ENCODE measurements at regions of chr1 and their contacts with region 1.

Region 1: DNA sequence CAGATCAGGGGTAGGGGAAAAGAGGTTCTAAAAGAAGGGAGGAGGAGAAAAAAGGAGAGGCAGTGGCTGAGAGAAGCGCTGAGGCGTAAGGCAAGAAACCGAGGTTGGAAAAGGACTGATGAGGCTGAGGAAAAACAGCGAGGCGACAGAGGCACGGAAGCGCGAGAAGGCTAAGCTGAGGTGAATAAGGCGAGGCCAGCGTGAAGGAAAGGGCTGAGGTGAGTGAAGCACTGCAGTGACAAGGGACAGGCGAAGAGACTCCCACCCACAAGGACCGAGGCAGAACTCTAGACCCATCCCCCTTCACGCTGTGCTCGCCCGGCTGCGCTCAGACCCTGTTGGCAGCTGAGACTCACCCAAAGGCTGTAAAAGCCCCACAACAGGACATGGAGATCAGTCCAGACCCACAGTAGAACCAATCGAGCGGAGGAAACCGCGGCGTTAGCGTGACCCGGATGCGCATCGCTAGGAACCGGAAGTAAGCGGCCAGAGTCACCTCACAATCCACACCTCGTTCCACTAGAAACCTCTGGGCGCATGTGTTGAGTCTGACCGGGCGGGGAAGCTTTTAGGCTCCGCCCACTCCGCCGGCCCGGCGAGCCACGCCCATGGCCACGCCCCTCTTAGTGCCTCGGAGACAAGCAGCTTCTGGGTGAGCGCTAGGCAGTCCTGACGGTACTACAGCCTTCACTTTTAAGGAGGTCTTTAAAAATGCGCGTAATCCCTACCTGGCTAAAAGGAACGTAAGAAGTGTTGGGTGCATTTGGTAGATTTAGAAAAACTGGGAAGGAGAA is at the start of gene EYA3:
- H3K4me3 ChIP-seq: peak within 1 kb of the TSS; percentile 93
- H3K27ac ChIP-seq: peak within 1 kb of the TSS; percentile 90
- H3K4me1 ChIP-seq: peaks cover 5% of the 10 kb centered on the region; the same call in 1 of the 2 replicates
- CTCF ChIP-seq: 0 out of 2 replicates have a peak, but pooled peaks have one; percentile 2

Region 2: DNA sequence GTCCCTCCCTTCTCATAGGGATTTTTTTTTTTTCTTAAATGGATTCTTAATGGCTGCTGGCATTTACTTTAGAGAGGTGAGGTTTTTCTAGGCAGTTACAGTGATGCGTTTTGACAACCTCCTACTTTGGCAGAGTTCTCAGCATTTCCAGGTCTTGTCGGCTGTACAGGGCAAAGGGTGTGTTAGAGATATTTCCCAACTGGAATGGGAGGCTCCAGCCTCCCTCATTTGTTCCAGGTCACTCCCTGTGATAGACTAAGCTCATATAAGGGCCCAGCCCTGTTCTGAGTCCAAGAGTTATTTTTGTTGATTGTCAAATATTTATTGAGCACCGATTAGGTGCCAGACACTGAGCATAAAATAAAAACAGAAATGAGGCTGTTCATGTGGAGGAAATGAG is 136.2 kb before region 1 on chr1:
- CTCF ChIA-PET with region 1: no interaction called
- POLR2A ChIA-PET with region 1: no interaction called
- H3K4me3 ChIP-seq: no peak overlapping the region
- H3K27ac ChIP-seq: no peak overlapping the region
- H3K4me1 ChIP-seq: no peaks in the 10 kb centered on the region
- CTCF ChIP-seq: no peak

Region 3: DNA sequence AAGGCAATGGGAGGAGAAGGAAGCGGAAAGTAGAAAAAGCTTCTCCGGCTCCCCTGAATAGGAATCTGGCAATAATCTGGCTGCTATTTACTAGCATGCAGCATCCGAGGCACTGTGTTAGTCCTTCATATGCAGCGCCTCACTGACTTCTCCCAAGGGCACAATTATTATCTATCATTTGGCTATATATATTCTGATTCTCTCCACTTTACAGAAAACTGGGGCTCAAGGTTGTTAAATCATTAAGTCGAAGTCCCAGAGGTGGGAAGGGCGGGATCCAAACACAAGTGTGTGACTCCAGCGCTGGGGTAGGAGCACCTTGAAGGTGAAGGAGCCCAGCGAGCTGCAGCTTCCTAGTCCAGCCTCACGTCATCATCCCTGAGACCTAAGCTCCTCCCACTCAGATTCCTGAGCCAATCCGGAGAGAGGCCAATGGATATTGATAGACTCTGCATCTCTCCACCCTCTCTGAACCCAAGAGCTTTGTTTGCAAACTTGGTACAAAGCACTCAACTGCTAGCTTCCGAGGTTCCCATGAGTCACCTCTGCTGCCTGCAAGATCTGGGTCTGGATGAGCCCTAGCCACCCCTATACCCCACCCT is 16.6 kb after region 1 on chr1:
- CTCF ChIA-PET with region 1: interaction called, 38 read pairs
- POLR2A ChIA-PET with region 1: interaction called, 19 read pairs
- H3K4me3 ChIP-seq: peak overlapping the region; percentile 8
- H3K27ac ChIP-seq: no peak overlapping the region
- H3K4me1 ChIP-seq: no peaks in the 10 kb centered on the region
- CTCF ChIP-seq: no peak

Region 4: DNA sequence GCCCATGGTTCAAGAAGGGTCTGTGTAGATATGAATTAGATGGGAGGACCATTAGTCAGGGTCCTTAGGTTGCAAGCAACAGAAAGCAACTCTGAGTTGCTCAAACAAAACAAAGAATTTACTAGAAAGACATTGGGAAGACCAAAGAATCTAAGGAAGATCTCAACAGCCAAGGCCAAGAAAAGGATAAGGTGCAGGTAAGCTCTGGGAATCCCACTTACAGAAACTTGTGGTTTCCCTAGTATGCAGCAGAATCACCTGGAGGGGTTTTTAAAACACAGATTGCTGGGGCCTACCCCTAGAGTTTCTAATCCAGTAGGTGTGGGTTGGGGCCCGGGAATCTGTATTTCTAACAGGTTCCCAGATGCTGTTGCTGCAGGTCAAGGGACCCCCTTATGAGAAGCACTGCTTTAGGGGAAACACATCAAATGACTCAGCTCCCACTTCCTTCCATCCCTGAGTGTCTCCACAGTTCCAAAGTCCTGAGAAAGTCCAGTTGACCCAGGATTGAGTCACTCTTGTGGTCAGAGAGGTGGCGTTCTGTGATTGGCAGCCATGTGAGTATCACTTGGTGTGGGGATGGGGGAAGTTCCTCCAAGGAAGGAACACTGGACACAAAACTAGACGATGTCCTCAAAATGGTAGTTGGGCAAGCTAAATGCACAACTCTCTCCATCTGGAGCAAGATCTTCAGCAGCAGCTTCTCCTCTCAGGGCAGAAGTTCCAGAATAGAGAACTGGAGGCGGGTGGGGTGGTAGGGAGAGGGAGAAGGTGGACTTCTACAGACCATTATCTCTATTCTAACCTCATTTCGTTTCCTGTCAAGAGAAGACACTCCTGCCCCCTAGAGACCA is 24.2 kb after region 1 on chr1:
- CTCF ChIA-PET with region 1: interaction called, 22 read pairs
- POLR2A ChIA-PET with region 1: no interaction called
- H3K4me3 ChIP-seq: no peak overlapping the region
- H3K27ac ChIP-seq: no peak overlapping the region
- H3K4me1 ChIP-seq: no peaks in the 10 kb centered on the region
- CTCF ChIP-seq: 0 out of 2 replicates have a peak, but pooled peaks have one; percentile 7

Region 5: DNA sequence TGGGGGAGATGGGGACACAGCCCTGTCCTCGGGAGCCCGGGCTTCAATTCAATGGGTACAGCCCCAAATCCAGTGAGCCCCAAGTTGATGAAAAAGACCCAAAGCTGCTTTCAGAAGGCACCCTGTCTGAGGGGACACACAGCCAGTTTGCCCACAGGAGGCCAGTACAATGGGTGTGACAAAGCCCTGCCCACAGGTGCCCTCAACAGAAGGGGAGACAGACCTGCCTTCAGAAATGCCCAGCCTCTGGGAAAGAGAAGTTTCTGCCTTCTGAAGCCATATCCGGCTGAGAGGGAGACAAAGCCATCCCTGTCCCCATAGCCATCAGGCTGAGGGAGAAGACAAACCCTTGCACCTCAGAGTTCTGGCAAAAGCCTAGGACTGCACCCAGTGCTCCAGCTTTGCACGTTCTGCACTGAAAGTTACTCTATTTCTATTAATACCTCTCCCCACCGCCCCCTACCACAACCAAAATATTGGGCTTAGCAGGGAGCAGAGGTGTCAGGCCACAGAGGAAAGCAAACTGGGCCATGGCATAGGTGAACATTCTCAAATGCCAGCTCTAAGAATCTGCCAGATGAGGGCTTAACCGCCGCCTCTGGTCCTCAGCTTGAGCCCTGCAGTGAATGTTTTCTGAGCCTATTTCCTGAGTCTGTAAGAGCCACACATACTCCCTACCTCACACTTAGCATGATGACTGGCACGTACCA is 106.1 kb after region 1 on chr1:
- CTCF ChIA-PET with region 1: interaction called, 18 read pairs
- POLR2A ChIA-PET with region 1: no interaction called
- H3K4me3 ChIP-seq: no peak overlapping the region
- H3K27ac ChIP-seq: no peak overlapping the region
- H3K4me1 ChIP-seq: peaks cover 7% of the 10 kb centered on the region; the same call in 1 of the 2 replicates
- CTCF ChIP-seq: no peak

Region 6: GRCh38 chr1:28208818-28209441 is 120.6 kb after region 1 on chr1:
- CTCF ChIA-PET with region 1: interaction called, 90 read pairs
- POLR2A ChIA-PET with region 1: interaction called, 5 read pairs
- H3K4me3 ChIP-seq: no peak overlapping the region
- H3K27ac ChIP-seq: no peak overlapping the region
- H3K4me1 ChIP-seq: no peaks in the 10 kb centered on the region
- CTCF ChIP-seq: 0 out of 2 replicates have a peak, but pooled peaks have one; percentile 28

Measured in HEK293 (cell line).